ENCODE measurements at regions of chr17 and their contacts with region 1.

Region 1: DNA sequence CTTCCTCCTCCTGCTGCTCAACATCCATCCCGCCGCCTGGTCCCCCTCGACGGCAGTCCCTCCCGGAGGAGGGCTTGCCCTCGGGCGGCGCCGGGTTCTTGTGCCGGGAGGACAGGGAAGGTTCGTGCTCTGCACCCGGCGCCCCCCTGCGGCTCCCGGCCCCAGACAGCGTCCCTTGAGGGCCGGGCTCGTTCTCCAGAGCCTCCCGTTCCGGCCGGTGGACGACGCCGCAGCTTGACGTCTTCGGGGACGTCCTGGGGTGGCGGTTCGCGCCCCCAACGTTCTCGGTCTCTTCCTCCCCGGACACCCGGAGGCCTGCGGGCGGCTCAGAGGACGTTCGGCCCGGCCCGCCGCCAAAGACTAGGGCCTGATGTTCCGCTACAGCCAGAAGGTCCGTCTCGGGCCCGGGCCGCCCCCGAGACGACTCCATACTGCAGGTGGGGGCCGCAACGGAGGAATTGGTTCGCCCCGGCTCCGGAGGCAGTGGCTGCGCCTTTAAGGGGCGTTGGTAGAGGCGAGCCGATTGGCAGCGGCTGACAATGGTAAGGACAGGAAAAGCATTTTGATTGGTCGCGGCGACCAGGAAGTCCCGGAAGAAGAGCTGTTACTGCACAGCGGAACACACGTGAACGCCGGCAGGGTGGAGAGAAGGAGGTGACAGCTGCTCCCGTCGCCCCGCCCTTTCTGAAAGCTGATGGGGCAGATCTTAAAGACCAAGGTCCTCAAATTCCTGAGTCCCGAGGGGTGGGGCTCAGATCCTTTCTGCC is at the start of gene BORCS6:
- DNase-seq: peak; percentile 100
- H3K4me3 ChIP-seq: peak within 1 kb of the TSS; percentile 76 to 79
- H3K27ac ChIP-seq: peak within 1 kb of the TSS; percentile 96
- H3K4me1 ChIP-seq: peaks cover 33% of the 10 kb centered on the region
- H3K27me3 ChIP-seq: no peaks in the 10 kb centered on the region
- CTCF ChIP-seq: no peak
- POLR2A ChIP-seq: peak; percentile 6
- total RNA-seq, gene BORCS6: 8.7 to 10.4 TPM

Region 2: DNA sequence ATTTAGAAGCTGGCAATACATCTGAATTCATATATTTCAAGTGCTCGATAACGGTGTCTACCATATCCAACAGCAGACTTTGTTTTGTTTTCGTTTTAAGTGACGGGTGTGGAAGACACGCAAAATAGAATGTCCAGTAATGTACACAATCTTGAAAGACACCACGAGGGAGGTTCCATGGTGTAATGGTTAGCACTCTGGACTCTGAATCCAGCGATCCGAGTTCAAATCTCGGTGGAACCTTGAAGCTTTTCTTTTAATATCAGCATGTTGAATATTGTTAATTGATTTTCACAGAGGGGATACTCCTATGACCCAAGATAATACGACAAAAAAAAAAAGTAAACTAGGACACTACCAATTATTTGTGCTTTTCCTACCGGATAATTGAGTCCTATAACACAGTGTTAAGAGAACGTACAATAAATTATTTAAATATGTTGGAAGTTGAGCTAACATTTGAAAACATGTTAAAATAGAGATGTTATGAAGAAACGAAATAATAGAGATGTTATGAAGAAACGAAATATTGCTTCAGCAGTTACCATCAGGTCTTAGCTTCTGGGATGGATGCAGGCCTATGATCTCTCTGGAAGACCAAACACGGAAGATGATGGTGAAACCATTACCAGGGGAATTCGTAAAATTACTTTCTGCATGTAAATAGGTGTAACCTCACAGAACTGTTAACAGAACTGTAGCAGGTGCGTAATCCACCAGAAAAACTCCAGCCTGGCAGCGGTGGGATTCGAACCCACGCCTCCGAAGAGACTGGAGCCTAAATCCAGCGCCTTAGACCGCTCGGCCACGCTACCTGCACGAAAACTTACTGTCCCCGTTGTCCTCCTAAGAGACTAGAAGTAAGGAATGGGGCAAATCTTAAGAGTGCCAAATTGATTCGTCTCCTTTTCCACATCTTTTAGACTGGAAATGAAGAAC is 70.0 kb before region 1 on chr17:
- intact Hi-C with region 1: loop called (anchors 10 kb)
- DNase-seq: peak; percentile 87
- H3K4me3 ChIP-seq: peak overlapping the region; percentile 55 to 62
- H3K27ac ChIP-seq: peak overlapping the region; percentile 69 to 81
- H3K4me1 ChIP-seq: peaks cover 41% of the 10 kb centered on the region
- H3K27me3 ChIP-seq: no peaks in the 10 kb centered on the region
- CTCF ChIP-seq: no peak
- POLR2A ChIP-seq: no peak

Region 3: DNA sequence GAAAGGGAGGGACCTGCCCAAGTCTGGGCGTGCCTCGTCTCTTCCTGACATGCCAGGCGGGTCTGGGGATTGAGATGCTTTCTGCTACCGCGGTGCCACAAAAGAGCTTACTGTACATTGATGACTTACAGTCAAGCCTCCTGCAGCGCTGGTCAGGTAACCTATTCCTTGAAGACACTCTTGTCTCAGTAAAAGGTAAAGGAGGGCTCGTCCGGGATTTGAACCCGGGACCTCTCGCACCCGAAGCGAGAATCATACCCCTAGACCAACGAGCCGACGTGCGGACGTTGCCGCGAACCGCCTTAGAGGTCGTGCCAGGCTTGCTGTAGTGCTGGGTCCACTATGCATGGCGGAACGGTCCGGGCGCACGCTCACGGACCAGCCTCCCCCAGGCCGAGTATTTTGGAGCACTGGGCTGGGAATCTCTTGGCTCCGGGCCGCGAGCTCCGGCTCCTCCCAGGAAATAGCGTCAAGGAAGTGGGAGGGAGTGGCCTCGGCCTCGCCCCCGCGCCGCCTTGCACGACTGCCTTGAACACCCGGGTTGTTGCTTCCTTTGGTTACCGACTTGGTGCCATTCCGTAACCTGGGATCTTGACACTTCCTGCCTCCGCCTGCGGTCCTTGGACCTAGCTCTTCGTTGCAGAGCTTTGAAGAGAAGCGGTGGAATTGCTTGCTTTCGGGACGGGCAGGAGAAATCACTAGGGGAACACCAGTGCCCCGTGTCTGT is 32.9 kb after region 1 on chr17:
- intact Hi-C with region 1: loop called (anchors 5 kb)
- DNase-seq: peak; percentile 94
- H3K4me3 ChIP-seq: peak overlapping the region; percentile 74 to 86
- H3K27ac ChIP-seq: peak overlapping the region; percentile 99
- H3K4me1 ChIP-seq: peaks cover 15% of the 10 kb centered on the region
- H3K27me3 ChIP-seq: no peaks in the 10 kb centered on the region
- CTCF ChIP-seq: peak in 1 of 3 experiments; percentile 4
- POLR2A ChIP-seq: peak; percentile 50

Measured in testis (tissue), 5 donors.